ENCODE measurements at regions of chr11 and their contacts with region 1.

Region 1: GRCh38 chr11:127939000-127939399 is 648.4 kb downstream of the ETS1 start:
- DNase-seq: no peak
- H3K4me3 Mint-ChIP-seq: no peak overlapping the region
- H3K27ac Mint-ChIP-seq: no peak overlapping the region
- H3K4me1 Mint-ChIP-seq: peaks cover 7% of the 10 kb centered on the region
- H3K27me3 Mint-ChIP-seq: peaks cover 3% of the 10 kb centered on the region

Region 2: GRCh38 chr11:127919206-127920000 is 19.6 kb before region 1 on chr11:
- CTCF ChIA-PET with region 1: no interaction called
- POLR2A ChIA-PET with region 1: interaction called, 13 read pairs
- DNase-seq: no peak
- H3K4me3 Mint-ChIP-seq: no peak overlapping the region
- H3K27ac Mint-ChIP-seq: no peak overlapping the region
- H3K4me1 Mint-ChIP-seq: no peaks in the 10 kb centered on the region
- H3K27me3 Mint-ChIP-seq: peaks cover 4% of the 10 kb centered on the region

Measured in activated CD4-positive, alpha-beta T cell treated with anti-CD3 and anti-CD28 coated beads, Interleukin-2, amount 10 ng/mL, durations not matched to agents 7 days and 5 days (primary cell).